BJ (cell line): ENCODE measurements at regions of chr12 and their contacts with region 1.

Region 1: DNA sequence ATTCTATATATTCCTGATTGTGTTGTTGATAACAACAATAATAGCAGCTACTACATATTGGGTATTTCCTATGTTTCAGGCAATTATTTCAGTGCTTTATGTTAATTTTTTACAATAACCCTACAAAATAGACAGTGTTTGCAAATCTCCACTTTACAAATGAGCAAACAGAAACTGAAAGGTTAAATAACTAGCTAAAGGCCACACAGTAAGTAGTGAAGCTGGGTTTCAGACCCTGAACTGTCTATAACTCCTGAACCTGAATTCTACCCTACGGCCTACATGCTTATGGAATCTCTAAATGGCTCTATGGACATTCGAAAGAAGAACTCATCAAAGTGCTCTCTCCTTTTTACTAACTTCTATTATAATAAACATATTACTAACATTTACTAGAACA is 19.7 kb upstream of the NUDT4 start:
- DNase-seq: no peak
- H3K4me3 ChIP-seq: no peak overlapping the region
- H3K27me3 ChIP-seq: no peaks in the 10 kb centered on the region
- CTCF ChIP-seq: no peak

Region 2: GRCh38 chr12:93163260-93164036 is 194.6 kb before region 1 on chr12:
- CTCF ChIA-PET with region 1: no interaction called
- POLR2A ChIA-PET with region 1: interaction called, 12 read pairs
- DNase-seq: peak; percentile 83
- H3K4me3 ChIP-seq: no peak overlapping the region
- H3K27me3 ChIP-seq: no peaks in the 10 kb centered on the region
- CTCF ChIP-seq: no peak